Right ventricle myocardium superior (tissue), 1 donor: ENCODE measurements at regions of chr3 and their contacts with region 1.

Region 1: DNA sequence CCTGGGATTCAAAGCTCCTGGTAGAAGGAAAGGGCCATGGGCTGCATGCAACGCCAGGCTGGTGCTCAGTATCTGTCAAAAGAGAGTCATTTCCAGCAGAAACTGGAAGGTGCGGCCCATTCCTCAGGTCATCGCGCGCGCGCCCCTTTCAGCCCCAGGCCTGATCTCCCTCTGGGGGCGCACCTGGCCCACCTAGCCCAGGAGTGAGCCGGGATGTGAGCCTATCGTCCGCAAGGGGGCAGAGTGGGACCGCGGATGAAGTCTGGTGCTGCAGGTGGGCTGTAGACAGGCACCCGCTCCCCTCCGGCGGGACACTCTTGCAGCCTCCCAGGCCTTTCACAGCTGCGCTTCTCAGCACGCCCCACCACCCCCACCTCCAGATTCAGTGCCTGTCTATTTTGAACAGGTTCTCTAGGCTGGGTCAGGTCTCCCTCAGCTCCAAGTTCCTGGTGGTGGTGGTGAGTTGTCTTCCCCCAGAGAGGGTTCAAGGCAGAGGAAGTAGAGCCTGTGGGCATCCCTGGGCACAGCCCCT is 5.8 kb upstream of the RPL29 start:
- DNase-seq: peak; percentile 85
- ATAC-seq: peak; percentile 68

Region 2: GRCh38 chr3:51887620-51888019 is 113.9 kb before region 1 on chr3:
- intact Hi-C with region 1: no loop called
- DNase-seq: no peak
- ATAC-seq: no peak

Region 3: GRCh38 chr3:52052831-52053306 is 51.4 kb after region 1 on chr3:
- intact Hi-C with region 1: loop called (anchors 5 kb)
- DNase-seq: peak; percentile 95
- ATAC-seq: peak; percentile 41

Region 4: DNA sequence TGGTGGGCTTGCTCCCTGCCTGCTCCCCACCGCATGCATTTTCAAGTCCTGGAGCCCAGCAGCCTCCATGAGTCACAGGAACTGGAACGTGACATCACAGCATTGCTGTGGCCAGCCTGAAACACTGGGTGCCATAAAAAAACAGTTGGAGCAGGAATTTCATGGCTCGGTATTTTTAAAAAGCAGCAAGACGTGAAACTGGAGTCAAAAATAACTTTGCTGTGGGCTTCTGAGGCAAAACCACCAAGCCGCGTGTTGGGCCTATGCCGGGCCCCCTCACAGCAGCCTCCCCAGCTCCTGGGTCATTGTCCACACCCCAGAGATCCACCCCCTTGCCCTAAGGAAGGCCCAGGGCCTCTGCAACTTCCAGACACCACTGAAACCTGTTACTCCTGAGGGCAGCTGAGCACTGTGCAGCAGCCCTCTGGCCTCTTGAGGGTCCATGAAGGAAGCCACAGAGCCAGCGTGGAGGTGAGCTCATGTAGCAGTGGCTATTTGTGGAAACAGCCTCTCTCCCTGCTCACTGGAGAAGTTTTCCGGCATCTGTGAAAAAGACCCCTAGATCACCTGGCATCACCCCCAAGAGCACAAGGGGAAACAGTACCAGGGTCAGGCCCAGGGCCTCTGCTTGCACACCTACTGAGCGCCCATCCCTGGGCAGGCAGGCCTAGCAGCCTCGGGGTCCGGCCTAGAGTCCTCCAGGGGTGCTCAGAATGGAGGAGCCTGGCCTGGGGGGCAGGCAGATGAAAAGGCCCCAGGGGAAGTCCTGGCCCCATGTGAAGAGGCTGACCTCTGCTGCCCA is 88.8 kb after region 1 on chr3:
- intact Hi-C with region 1: no loop called
- DNase-seq: peak; percentile 51
- ATAC-seq: no peak

Region 5: GRCh38 chr3:52123106-52123725 is 121.7 kb after region 1 on chr3:
- intact Hi-C with region 1: loop called (anchors 2 kb)
- DNase-seq: peak; percentile 84
- ATAC-seq: peak; percentile 86

Region 6: GRCh38 chr3:52144034-52144795 is 142.7 kb after region 1 on chr3:
- intact Hi-C with region 1: loop called (anchors 1 kb)
- DNase-seq: peak; percentile 89
- ATAC-seq: peak; percentile 86

Region 7: DNA sequence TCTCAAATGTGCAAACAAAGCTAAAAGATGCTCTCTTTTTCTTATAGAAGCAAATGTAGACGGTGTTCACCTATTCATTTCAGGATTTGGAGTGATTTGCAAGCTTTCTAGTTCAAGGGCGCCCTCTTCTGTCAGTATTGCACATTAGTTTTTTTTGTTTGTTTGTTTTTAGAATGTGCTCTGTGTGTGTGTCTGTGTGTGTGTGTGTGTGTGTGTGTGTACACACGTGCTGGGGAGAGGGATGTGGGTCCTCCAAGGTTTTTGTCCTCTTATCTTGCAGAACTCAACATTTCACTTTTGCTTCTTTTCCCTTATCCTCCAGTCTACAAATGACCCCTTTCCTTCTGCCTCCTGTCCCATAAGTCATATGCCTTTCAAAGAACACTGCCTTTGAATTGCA is 338.1 kb after region 1 on chr3:
- intact Hi-C with region 1: loop called (anchors 10 kb)
- DNase-seq: peak; percentile 4
- ATAC-seq: peak; percentile 69

Region 8: DNA sequence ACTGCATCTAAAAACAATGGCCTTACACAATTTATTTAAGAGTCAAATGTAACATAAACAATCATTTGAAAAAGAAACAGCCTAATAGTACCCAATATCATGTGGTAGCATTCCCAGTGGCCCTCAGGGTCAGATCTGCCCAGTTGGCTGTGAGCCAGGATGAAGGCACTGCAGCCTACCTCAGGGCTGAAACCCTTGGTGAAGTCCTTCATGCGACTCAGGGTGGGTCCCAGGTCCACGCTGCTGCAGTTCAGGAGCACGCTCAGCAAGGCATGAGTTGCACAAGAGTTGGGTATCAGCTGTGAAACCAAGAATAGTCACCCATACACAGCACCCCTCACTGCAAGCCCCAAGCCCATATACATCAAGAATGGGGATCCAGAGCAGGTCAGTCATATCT is 406.3 kb after region 1 on chr3:
- intact Hi-C with region 1: no loop called
- DNase-seq: peak; percentile 41
- ATAC-seq: no peak